Left cardiac atrium (tissue), 4 donors: ENCODE measurements at regions of chr10 and their contacts with region 1.

Region 1: GRCh38 chr10:125060826-125061556 is 99.4 kb downstream of the CTBP2 start:
- DNase-seq: peak; percentile 89
- ATAC-seq: peak; percentile 55 to 63

Region 2: DNA sequence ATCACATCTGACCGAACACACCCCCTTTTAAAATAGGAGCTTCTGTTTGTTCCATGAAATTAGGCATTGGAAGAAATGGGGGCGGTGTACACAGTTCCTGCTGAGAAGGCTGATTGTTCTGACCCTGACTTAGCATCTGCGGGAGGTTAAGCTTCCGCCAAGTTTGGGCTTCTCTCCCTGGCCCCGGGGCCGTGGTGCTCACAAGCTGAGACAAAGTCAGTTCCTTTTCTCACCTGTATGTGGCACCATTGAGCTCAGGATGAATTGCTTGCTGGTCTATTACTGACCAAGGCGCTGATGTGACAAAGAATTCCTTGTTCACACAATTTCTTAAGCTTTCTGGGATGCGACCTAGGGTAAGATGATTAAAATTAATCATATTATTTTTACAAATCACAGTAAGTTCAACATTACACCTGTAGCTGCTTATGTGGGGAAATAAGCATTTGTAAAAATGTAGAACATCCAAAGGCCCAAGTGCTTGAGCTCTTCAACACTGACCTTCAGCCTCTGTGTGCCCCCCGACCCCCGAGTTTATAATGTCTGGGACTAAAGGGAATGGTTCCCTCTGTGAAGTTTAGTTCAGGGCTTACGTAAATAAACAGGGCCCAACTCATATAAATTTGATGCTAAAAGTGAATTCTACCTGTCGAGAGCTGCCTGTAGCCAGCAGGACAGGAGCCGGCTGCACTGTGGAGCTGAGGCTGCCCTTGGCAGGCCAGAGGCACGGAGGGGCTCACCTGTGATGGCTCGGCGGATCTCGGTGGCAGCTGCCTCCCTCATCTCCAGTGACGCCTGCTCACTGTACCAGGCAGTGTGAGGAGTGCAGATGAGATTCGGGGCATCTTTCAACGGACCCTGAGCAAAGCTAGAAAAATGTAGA is 68.3 kb before region 1 on chr10:
- intact Hi-C with region 1: loop called (anchors 5 to 10 kb)
- DNase-seq: peak; percentile 80
- ATAC-seq: peak; percentile 61 to 78

Region 3: DNA sequence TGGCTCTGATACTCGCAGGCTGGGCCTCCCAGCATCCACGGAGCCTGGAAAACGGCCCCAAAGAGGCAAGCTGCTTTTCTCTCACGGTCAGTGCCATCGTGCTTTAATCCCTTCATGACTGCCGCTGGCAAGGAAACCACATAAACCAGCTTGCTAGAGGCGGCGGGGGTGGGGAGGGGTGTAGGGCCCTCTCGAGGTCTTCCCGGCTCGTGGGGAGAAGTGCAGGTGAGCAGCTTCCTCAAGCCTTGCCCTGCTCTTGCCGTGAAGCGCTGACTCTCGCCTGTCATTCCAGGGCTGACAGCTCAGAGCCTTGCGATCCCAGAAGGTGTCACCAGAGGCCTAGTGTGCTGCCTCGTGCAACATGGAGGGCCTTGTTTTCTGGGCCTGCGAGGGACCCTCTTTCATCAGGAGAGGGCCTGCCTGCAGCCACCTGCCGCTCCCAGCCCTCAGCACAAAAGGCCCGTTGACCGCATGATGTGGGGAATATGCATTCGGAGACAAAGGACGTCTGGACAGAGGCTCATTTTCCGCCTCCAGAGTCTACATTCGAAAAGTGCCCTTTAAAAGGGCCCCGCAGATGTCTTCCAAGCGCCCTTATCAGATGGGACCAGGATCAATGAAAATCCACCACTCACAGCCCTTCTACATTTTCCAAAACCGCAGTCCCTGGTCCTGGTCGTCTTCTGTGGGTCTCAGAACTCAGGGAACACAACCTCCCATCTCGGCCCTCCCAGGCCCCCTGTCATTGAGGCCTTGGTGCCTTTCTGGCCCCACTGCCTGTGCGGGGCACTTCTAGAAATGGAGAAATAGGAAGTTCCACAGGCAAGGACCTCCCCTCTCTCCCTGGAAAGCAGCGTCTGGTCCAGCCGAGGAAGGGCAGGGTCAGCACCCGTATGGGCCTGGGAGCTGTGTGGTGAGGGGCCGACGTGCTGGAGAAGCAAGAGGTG is 60.4 kb before region 1 on chr10:
- intact Hi-C with region 1: loop called (anchors 5 to 10 kb)
- DNase-seq: peak; percentile 24
- ATAC-seq: peak; percentile 11 to 24

Region 4: DNA sequence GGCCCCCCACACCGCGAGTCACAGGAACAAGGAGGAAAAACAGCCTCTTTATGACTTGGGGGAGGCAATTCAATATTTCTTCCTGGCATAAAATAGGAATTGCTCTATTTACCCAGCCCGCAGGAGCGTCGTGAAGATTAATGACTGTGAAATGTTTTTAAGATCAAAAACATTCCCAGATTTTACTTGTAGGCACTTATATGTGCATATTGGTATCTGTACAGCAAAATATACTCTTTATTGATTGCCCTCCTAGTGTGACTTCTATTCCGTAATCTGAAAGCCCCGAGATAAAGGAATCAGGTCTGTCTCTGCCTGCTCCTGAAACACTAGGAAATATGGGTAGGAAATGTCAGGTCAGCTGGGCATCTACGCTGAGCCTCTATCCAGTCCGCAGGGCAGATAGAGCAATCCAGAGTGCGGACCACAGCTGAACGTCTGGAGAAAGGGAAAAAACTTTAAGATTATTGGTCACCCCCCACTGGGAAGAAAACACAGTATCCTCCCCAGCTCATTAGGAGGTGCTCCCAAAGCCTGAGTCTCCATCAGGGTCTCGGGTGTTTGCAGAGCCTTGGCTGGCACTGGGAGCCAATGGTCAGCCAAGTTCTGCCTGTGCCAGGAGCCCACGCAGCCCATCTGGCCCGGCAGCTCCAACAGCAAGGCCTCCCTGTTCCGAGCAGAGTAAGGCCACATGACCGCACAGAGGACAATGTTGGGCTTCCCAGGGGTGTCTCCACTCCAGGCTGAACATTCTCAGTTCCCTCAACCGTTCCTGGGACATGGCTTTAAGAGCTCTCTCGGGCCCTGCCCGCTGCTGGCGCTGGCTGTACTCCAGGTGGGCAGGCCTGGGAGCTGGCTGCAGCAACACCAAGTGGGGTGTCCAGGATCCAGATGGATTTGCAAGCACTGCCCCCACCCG is 91.7 kb after region 1 on chr10:
- intact Hi-C with region 1: loop called in 1 of 2 experiments (anchors 5 kb)
- DNase-seq: peak; percentile 55
- ATAC-seq: peak; percentile 69 to 76

Region 5: DNA sequence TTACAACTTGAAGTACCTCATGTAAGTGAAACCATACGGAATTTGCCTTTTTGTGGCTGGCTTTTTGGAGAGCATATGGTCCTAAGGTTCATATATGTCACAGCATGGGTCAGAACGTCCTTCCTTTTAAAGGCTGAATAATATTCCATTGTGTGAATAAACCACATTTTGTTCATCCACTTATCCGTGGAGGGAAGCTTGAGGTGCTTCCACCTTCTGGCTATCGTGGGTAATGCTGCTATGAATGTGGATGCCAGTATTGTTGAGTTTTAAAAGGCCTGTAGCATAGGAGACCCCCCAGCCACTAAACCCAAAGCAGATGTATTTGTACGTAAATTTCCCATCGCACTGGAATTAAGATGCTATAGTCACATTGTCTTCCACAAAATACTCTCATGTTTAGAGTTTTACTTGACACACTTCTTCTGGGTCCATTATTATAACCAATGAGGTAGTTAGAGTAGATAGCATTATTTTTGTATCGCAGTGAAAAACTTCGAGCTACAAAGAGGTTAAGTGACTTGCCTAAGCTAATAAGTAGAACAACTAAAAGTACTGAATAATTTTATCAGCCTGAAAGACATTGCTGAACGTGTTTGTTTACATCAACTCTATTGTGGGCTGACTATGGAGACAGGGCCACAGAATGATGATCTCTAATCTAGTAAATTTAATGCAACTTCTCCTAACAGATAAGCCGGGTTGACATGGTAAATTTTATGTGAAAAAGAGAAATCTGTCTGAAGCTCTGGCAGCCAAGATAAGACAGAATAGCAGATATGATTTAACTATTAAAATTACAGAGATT is 282.3 kb after region 1 on chr10:
- intact Hi-C with region 1: loop called in 1 of 2 experiments (anchors 5 kb)
- DNase-seq: no peak
- ATAC-seq: no peak

Region 6: GRCh38 chr10:125392154-125392553 is 331.2 kb after region 1 on chr10:
- intact Hi-C with region 1: no loop called
- DNase-seq: no peak
- ATAC-seq: no peak